ENCODE measurements at regions of chr20 and their contacts with region 1.

Region 1: GRCh38 chr20:56247948-56248782 is at the start of gene MC3R:
- DNase-seq: peak; percentile 42
- H3K4me3 ChIP-seq: no peak within 1 kb of the TSS
- H3K27ac ChIP-seq: no peak within 1 kb of the TSS
- H3K4me1 ChIP-seq: no peaks in the 10 kb centered on the region
- H3K27me3 ChIP-seq: peaks cover 30% of the 10 kb centered on the region
- CTCF ChIP-seq: peak; percentile 82
- total RNA-seq, gene MC3R: not detected in 2 replicates

Region 2: GRCh38 chr20:54680872-54681619 is 1567.1 kb before region 1 on chr20:
- CTCF ChIA-PET with region 1: no interaction called
- POLR2A ChIA-PET with region 1: no interaction called
- intact Hi-C with region 1: loop called (anchors 5 kb)
- DNase-seq: peak; percentile 70
- H3K4me3 ChIP-seq: no peak overlapping the region
- H3K27ac ChIP-seq: no peak overlapping the region
- H3K4me1 ChIP-seq: no peaks in the 10 kb centered on the region
- H3K27me3 ChIP-seq: peaks cover 48% of the 10 kb centered on the region
- CTCF ChIP-seq: peak; percentile 83

Region 3: DNA sequence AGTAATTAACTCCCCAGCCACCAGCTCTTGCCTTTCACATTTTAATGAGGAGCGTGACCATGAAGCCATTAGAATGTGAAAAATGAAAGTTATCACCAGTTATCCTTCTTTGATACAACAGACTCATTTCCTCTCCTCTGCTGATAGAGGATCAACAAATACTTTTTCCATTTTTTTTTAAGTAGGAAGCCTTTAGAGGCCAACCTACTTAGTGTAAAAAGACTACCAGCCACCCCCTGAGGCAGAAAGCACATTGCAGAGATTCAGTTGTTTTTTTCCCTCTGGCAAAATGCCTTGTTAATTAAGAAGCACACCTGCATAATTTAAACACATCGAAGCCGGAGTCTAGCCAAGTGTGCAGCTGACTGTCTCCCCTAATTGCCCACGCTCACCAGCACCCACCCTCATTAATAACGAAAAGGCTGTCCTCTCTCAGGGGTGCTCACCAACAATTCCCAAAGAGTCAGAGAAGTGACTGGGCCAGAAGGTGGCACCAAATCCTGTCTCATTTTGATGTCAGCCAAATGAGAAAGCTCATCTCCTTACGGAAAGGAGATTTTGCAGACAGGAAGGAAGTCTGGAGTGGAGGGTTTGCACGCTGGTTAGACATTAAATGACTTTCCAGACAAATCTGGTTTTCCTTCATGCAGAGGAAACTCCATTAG is 60.5 kb before region 1 on chr20:
- CTCF ChIA-PET with region 1: no interaction called
- POLR2A ChIA-PET with region 1: no interaction called
- intact Hi-C with region 1: loop called (anchors 5 kb)
- DNase-seq: peak; percentile 53
- H3K4me3 ChIP-seq: no peak overlapping the region
- H3K27ac ChIP-seq: no peak overlapping the region
- H3K4me1 ChIP-seq: no peaks in the 10 kb centered on the region
- H3K27me3 ChIP-seq: no peaks in the 10 kb centered on the region
- CTCF ChIP-seq: peak; percentile 50

Region 4: GRCh38 chr20:56343861-56344381 is 95.8 kb after region 1 on chr20:
- CTCF ChIA-PET with region 1: interaction called, 3 read pairs
- POLR2A ChIA-PET with region 1: no interaction called
- intact Hi-C with region 1: loop called (anchors 2 kb)
- DNase-seq: peak; percentile 72
- H3K4me3 ChIP-seq: peak overlapping the region; percentile 16
- H3K27ac ChIP-seq: no peak overlapping the region
- H3K4me1 ChIP-seq: no peaks in the 10 kb centered on the region
- H3K27me3 ChIP-seq: peaks cover 35% of the 10 kb centered on the region
- CTCF ChIP-seq: peak; percentile 85

Measured in A673 (cell line).